H1 (cell line): ENCODE measurements at regions of chr2 and their contacts with region 1.

Region 1: GRCh38 chr2:61426267-61426897 is 44.5 kb downstream of the USP34 start:
- DNase-seq: peak; percentile 17 to 83
- H3K4me3 ChIP-seq: no peak overlapping the region
- H3K27ac ChIP-seq: peak overlapping the region; percentile 19; the same call in 1 of the 2 replicates
- H3K4me1 ChIP-seq: peaks cover 3 to 8% (median 4%) of the 10 kb centered on the region in 4 experiments; a peak in 5 of 7 replicates
- H3K27me3 ChIP-seq: no peaks in the 10 kb centered on the region
- CTCF ChIP-seq: peak; percentile 58 to 92 (median 91)
- EP300 ChIP-seq: no peak
- POLR2A ChIP-seq: no peak
- RAD21 ChIP-seq: peak; percentile 79 to 80

Region 2: DNA sequence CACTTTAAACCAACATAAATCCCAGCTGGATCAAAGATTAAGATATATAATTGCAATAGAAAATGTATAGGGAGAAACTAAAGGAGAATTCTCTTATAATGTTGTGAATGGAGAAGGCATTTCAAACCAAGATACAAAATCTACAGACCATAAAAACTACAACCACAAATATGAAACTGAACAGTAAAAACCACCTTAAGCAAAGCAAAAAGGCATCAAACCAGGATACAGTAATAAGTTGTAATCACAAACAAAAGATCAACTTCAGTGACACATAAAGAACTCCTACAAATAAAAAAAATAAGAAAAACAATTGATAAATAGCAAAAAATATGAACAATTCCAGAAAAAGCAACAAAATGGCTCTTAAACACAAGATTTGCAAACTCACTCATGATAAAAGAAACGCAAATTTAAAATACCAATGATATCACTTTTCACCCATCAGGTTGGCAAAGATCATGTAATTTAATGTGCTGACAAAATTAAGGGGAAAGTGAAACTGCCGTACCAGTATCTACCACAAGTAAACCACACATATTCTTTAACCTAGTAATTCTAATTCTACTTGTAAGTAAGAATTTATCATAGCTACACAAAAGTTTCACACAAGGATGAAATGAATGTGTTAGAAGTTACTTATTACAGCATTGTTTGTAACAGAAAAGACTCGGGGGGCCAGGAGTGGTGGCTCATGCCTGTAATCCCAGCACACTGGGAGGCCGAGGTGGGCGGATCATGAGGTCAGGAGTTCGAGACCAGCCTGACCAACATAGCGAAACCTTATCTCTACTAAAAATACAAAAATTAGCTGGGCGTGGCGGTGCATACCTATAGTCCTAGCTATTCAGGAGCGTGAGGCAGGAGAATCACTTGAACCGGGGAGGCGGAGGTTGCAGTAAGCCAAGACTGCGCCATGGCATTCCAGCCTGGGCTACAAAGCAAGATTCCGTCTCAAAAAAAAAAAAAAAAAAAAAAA is 57.4 kb before region 1 on chr2:
- CTCF ChIA-PET with region 1: no interaction called
- POLR2A ChIA-PET with region 1: no interaction called
- DNase-seq: no peak
- H3K4me3 ChIP-seq: no peak overlapping the region
- H3K27ac ChIP-seq: no peak overlapping the region
- H3K4me1 ChIP-seq: no peaks in the 10 kb centered on the region; a peak in 1 of 7 replicates
- H3K27me3 ChIP-seq: no peaks in the 10 kb centered on the region
- CTCF ChIP-seq: no peak
- EP300 ChIP-seq: no peak
- POLR2A ChIP-seq: no peak
- RAD21 ChIP-seq: no peak

Region 3: GRCh38 chr2:61405813-61406212 is 20.6 kb before region 1 on chr2:
- CTCF ChIA-PET with region 1: interaction called, 14 read pairs
- POLR2A ChIA-PET with region 1: interaction called, 3 read pairs
- DNase-seq: no peak
- H3K4me3 ChIP-seq: no peak overlapping the region
- H3K27ac ChIP-seq: no peak overlapping the region
- H3K4me1 ChIP-seq: no peaks in the 10 kb centered on the region
- H3K27me3 ChIP-seq: no peaks in the 10 kb centered on the region
- CTCF ChIP-seq: no peak
- EP300 ChIP-seq: no peak
- POLR2A ChIP-seq: no peak
- RAD21 ChIP-seq: no peak

Region 4: GRCh38 chr2:61411109-61411508 is 15.3 kb before region 1 on chr2:
- CTCF ChIA-PET with region 1: interaction called, 19 read pairs
- POLR2A ChIA-PET with region 1: interaction called, 4 read pairs
- DNase-seq: no peak
- H3K4me3 ChIP-seq: no peak overlapping the region
- H3K27ac ChIP-seq: no peak overlapping the region
- H3K4me1 ChIP-seq: no peaks in the 10 kb centered on the region
- H3K27me3 ChIP-seq: no peaks in the 10 kb centered on the region
- CTCF ChIP-seq: no peak
- EP300 ChIP-seq: no peak
- POLR2A ChIP-seq: no peak
- RAD21 ChIP-seq: no peak

Region 5: GRCh38 chr2:61443342-61444041 is 17.1 kb after region 1 on chr2:
- CTCF ChIA-PET with region 1: interaction called, 48 read pairs
- POLR2A ChIA-PET with region 1: interaction called, 3 read pairs
- DNase-seq: no peak
- H3K4me3 ChIP-seq: no peak overlapping the region
- H3K27ac ChIP-seq: no peak overlapping the region
- H3K4me1 ChIP-seq: peaks cover 0 to 12% (median 4%) of the 10 kb centered on the region in 4 experiments; a peak in 6 of 7 replicates
- H3K27me3 ChIP-seq: no peaks in the 10 kb centered on the region
- CTCF ChIP-seq: no peak
- EP300 ChIP-seq: no peak
- POLR2A ChIP-seq: no peak
- RAD21 ChIP-seq: no peak

Region 6: DNA sequence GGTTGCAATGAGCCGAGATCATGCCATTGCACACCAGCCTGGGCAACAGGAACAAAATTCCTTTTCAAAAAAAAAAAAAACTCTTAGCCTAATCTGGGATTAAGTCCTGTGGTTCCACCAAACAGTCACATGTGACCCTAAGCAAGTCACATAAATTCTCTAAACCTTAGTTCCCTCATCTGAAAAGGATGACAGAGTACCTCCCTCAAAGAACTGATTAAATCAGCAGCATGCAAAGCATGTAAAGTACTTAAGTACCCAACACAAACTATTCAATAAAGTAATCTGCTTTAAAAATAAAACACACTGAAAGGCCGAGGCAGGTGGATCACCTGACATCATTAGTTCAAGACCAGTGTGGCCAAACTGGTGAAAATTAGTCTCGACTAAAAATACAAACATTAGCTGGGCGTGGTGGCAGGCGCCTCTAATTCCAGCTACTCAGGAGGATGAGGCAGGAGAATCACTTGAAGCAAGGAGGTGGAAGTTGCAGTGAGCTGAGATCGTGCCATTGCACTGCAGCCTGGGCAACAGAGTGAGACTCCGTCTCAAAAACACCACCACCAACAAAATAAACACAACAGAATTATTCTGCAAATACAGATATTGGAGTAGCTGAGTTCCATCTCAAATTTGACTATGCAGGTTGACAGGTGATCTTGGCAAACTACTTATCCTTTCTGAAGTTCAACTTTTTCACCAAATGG is 37.5 kb after region 1 on chr2:
- CTCF ChIA-PET with region 1: interaction called, 23 read pairs
- POLR2A ChIA-PET with region 1: interaction called, 8 read pairs
- DNase-seq: no peak
- H3K4me3 ChIP-seq: no peak overlapping the region
- H3K27ac ChIP-seq: no peak overlapping the region
- H3K4me1 ChIP-seq: peaks cover 0 to 3% (median 0%) of the 10 kb centered on the region in 4 experiments; a peak in 1 of 7 replicates
- H3K27me3 ChIP-seq: no peaks in the 10 kb centered on the region
- CTCF ChIP-seq: no peak
- EP300 ChIP-seq: no peak
- POLR2A ChIP-seq: no peak
- RAD21 ChIP-seq: no peak

Region 7: GRCh38 chr2:61470965-61471904 is 44.9 kb after region 1 on chr2 and contains the start of gene USP34:
- CTCF ChIA-PET with region 1: interaction called, 23 read pairs
- POLR2A ChIA-PET with region 1: interaction called, 8 read pairs
- DNase-seq: peak; percentile 77 to 83
- H3K4me3 ChIP-seq: peak within 1 kb of the TSS; percentile 76 to 99 (median 94)
- H3K27ac ChIP-seq: peak within 1 kb of the TSS; percentile 96
- H3K4me1 ChIP-seq: peaks cover 0 to 3% (median 0%) of the 10 kb centered on the region in 4 experiments; a peak in 5 of 7 replicates
- H3K27me3 ChIP-seq: no peaks in the 10 kb centered on the region
- CTCF ChIP-seq: no peak
- EP300 ChIP-seq: no peak
- POLR2A ChIP-seq: peak; percentile 76 to 89
- RAD21 ChIP-seq: no peak
- total RNA-seq, gene USP34: 80.9 and 91.7 TPM in 2 replicates

Region 8: GRCh38 chr2:61478086-61478485 is 51.7 kb after region 1 on chr2:
- CTCF ChIA-PET with region 1: interaction called, 11 read pairs
- POLR2A ChIA-PET with region 1: interaction called, 5 read pairs
- DNase-seq: no peak
- H3K4me3 ChIP-seq: no peak overlapping the region
- H3K27ac ChIP-seq: no peak overlapping the region
- H3K4me1 ChIP-seq: no peaks in the 10 kb centered on the region
- H3K27me3 ChIP-seq: no peaks in the 10 kb centered on the region
- CTCF ChIP-seq: no peak
- EP300 ChIP-seq: no peak
- POLR2A ChIP-seq: no peak
- RAD21 ChIP-seq: no peak